ENCODE measurements at regions of chr6 and their contacts with region 1.

Region 1: GRCh38 chr6:125489579-125490285 is 188.0 kb upstream of the HDDC2 start:
- DNase-seq: no peak
- H3K4me3 ChIP-seq: no peak overlapping the region
- H3K27ac ChIP-seq: no peak overlapping the region
- H3K4me1 ChIP-seq: no peaks in the 10 kb centered on the region
- CTCF ChIP-seq: no peak

Region 2: GRCh38 chr6:125503181-125503580 is 13.4 kb after region 1 on chr6:
- CTCF ChIA-PET with region 1: no interaction called
- POLR2A ChIA-PET with region 1: interaction called, 10 read pairs
- intact Hi-C with region 1: no loop called
- DNase-seq: no peak
- H3K4me3 ChIP-seq: no peak overlapping the region
- H3K27ac ChIP-seq: no peak overlapping the region
- H3K4me1 ChIP-seq: no peaks in the 10 kb centered on the region
- CTCF ChIP-seq: no peak

Region 3: GRCh38 chr6:125844989-125845388 is 355.3 kb after region 1 on chr6:
- CTCF ChIA-PET with region 1: no interaction called
- POLR2A ChIA-PET with region 1: no interaction called
- intact Hi-C with region 1: no loop called
- DNase-seq: no peak
- H3K4me3 ChIP-seq: no peak overlapping the region
- H3K27ac ChIP-seq: no peak overlapping the region
- H3K4me1 ChIP-seq: peaks cover 18% of the 10 kb centered on the region
- CTCF ChIP-seq: no peak